Sciatic nerve (tissue), 2 donors: ENCODE measurements at regions of chr6 and their contacts with region 1.

Region 1: GRCh38 chr6:88749849-88750248 is 213.6 kb downstream of the RNGTT start:
- DNase-seq: no peak
- ATAC-seq: no peak

Region 2: DNA sequence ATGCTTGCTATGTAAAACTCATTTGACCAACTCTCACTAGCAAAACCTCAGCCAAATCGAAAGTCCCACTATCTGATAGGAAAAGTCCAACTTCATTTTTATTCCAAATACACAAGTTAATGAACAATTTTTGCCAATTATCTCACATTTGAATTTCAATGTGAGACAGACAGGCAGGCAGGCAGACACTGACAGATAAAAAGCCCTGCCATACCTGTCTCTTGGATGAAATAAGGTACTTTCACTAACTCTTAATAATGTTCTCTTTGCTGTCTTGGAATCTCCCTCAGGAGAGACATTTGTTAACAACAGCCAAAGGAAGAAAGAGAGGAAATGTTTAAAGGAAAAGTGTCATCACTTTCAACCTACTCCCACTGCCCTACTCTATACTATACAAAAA is 131.6 kb after region 1 on chr6:
- intact Hi-C with region 1: loop called (anchors 10 kb)
- DNase-seq: no peak
- ATAC-seq: no peak